ENCODE measurements at regions of chr4 and their contacts with region 1.

Region 1: GRCh38 chr4:72375073-72375736 is 193.8 kb downstream of the ADAMTS3 start:
- DNase-seq: peak; percentile 79
- H3K4me3 ChIP-seq: no peak overlapping the region
- H3K27me3 ChIP-seq: no peaks in the 10 kb centered on the region
- CTCF ChIP-seq: no peak

Region 2: DNA sequence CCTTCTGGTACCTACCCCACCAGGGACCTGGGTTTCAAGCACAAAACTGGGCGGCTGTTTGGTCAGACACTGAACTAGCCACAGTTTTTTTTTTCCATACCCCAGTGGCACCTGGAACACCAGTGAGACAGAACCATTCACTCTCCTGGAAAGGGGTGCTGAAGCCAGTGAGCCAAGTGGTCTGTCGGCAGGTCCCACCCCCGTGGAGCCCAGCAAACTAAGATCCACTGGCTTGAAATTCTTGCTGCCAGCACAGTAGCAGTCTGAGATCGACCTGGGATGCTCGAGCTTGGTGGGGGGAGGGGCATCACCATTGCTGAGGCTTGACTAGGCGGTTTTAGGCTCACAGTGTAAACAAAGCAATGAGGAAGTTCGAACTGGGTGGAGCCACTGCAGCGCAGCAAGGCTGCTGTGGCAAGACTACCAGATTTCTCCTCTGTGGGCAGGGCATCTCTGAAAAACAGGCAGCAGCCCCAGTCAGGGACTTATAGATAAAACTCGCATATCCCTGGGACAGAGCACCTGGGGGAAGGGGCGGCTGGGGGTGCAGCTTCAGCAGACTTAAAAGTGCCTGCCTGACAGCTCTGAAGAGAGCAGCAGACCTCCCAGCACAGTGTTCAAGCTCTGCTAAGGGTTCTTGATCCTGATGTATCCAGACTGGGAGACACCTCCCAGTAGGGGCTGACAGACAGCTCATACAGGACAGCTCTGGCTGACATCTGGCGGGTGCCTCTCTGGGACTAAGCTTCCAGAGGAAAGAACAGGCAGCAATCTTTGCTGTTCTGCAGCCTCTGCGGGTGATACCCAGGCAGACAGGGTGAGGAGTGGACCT is 471.3 kb after region 1 on chr4:
- CTCF ChIA-PET with region 1: no interaction called
- POLR2A ChIA-PET with region 1: interaction called, 20 read pairs
- DNase-seq: no peak
- H3K4me3 ChIP-seq: no peak overlapping the region
- H3K27me3 ChIP-seq: no peaks in the 10 kb centered on the region
- CTCF ChIP-seq: no peak